H1 (cell line): ENCODE measurements at regions of chr6 and their contacts with region 1.

Region 1: GRCh38 chr6:52263709-52264540 is 19.6 kb upstream of the IL17F start:
- DNase-seq: peak; percentile 21 to 75
- H3K4me3 ChIP-seq: no peak overlapping the region
- H3K27ac ChIP-seq: no peak overlapping the region
- H3K4me1 ChIP-seq: no peaks in the 10 kb centered on the region; a peak in 1 of 7 replicates
- H3K27me3 ChIP-seq: no peaks in the 10 kb centered on the region
- CTCF ChIP-seq: peak; percentile 82 to 94 (median 88)
- EP300 ChIP-seq: no peak
- POLR2A ChIP-seq: no peak
- RAD21 ChIP-seq: peak; percentile 88

Region 2: DNA sequence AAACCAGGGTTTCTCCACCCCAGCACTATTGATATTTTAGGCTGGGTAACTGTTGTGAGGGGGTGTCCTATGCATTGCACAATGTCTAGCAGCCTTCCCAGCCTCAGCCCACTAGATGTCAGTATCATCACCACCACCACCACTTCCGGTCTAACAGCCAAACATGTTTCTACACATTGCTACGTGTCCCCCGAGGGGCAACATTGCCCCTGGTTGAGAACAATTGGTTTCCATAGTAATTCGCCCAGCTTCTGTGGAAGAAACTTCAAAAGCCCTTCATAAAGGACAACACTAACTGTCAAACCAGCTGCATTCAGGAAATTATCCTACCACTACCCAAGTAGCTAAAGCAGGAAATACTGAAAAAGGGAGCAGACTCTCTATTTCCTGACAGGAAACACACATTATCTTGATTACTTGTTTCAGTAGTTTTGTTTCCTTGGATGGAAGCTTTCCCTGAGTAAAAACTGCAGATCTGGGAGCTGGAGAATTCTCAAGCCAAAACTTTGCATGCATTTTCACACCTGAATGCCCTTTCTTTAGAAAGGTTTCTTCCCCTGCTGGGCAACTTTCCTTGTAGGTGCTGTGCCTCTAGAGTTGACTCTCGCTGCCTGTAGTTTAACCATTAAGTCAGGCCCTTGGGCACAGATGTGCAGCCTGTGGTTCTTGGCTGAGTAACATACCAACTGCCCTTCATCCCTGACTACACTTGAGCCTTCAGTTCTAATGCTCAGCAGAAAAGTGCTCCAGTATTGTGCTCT is 200.2 kb before region 1 on chr6:
- CTCF ChIA-PET with region 1: interaction called, 12 read pairs
- POLR2A ChIA-PET with region 1: no interaction called
- DNase-seq: peak in 1 of 2 experiments; percentile 15
- H3K4me3 ChIP-seq: no peak overlapping the region
- H3K27ac ChIP-seq: no peak overlapping the region; the same call in 1 of the 2 replicates
- H3K4me1 ChIP-seq: peaks cover 0 to 16% (median 7%) of the 10 kb centered on the region in 4 experiments; a peak in 5 of 7 replicates
- H3K27me3 ChIP-seq: no peaks in the 10 kb centered on the region
- CTCF ChIP-seq: peak; percentile 67 to 76 (median 70)
- EP300 ChIP-seq: no peak
- POLR2A ChIP-seq: no peak
- RAD21 ChIP-seq: peak; percentile 76 to 82

Region 3: DNA sequence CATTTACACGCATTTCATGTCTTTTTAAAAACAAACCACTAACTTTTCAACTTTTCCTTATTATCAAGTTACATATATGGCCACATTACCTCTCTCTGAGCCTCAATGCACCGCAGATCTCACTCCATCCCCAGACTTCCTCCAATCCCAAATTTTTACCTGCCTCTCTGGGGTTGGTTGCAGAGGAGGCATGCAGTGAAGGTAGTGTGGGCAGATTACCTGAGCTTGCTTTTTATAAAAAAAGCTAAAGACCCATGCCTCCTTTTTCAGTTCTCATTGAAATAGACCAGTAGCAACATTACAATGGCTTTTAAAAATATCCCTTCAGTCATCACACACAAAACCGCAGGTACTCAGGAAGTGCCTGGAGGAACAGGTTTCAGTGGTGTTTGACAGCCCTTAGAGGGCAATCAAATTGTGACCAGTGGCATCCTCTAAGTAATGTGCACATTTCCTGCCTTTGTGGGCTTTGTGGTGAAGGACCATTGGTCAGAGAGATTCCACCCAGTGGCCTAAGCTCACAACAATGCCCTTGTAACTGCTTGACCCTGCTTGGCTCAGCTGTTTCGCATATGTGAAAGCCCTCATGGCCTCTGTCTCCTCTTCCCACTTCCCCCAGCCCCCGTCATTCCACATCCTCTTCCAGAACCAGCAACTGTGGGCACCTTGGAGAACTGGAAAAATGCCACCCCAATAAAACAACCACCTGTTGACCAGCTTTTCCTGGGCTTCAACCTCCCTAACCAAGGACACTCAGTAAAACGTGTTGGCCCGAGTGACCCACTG is 107.9 kb before region 1 on chr6:
- CTCF ChIA-PET with region 1: interaction called, 149 read pairs
- POLR2A ChIA-PET with region 1: interaction called, 8 read pairs
- DNase-seq: peak; percentile 47 to 52
- H3K4me3 ChIP-seq: no peak overlapping the region; a peak in 1 of 8 replicates
- H3K27ac ChIP-seq: no peak overlapping the region
- H3K4me1 ChIP-seq: peaks cover 3 to 19% (median 15%) of the 10 kb centered on the region in 4 experiments; a peak in 6 of 7 replicates
- H3K27me3 ChIP-seq: no peaks in the 10 kb centered on the region; a peak in 1 of 7 replicates
- CTCF ChIP-seq: no peak
- EP300 ChIP-seq: no peak
- POLR2A ChIP-seq: no peak
- RAD21 ChIP-seq: peak in 1 of 2 experiments; percentile 6; a peak in 1 of 4 replicates

Region 4: DNA sequence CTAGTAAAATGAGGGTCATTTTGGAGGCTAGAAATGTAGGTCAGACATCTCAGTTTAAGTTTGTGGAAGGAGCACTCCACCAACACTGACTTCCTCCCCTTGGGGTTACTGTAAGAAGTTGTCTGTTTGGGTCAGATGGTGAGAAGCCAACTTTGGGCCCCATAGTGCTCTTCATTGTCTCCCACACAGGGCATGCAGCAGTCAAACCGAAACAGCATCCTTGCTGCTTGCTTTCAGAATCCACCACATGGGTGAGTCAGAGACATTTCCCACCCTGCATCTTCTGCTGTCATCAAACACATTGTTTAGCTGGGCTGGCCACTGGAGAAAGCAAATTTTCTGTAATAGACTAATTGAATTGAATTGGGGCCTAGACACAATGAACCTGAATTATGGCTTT is 36.4 kb before region 1 on chr6:
- CTCF ChIA-PET with region 1: interaction called, 39 read pairs
- POLR2A ChIA-PET with region 1: no interaction called
- DNase-seq: no peak
- H3K4me3 ChIP-seq: no peak overlapping the region
- H3K27ac ChIP-seq: no peak overlapping the region
- H3K4me1 ChIP-seq: no peaks in the 10 kb centered on the region
- H3K27me3 ChIP-seq: no peaks in the 10 kb centered on the region
- CTCF ChIP-seq: no peak
- EP300 ChIP-seq: no peak
- POLR2A ChIP-seq: no peak
- RAD21 ChIP-seq: no peak

Region 5: DNA sequence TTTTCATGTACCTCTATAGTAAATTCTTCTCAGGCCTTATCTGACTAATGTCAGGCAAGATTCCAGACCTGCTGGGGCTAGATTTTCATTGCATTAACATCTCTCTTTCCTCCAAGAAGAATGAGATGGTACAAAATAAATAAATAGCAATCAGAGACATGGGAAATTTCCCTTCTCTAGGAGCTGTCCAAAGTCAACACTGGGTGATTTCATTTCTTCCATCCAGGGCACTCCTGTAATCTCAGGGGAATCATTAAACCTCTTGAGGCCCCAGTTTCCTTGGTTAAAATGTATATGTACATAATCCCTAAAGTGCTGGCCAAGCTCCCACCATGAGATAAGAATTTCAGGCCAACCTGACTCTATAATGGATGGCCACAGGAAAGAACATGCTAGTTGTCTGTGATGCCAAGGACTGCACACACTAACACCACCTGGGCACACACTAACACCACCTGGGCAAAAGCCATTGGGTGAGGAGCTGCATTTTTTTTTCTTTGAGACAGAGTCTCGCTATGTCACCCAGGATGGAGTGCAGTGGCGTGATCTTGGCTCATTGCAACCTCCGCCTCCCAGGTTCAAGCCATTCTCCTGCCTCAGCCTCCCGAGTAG is 20.5 kb before region 1 on chr6:
- CTCF ChIA-PET with region 1: interaction called, 99 read pairs
- POLR2A ChIA-PET with region 1: interaction called, 5 read pairs
- DNase-seq: no peak
- H3K4me3 ChIP-seq: no peak overlapping the region
- H3K27ac ChIP-seq: no peak overlapping the region
- H3K4me1 ChIP-seq: no peaks in the 10 kb centered on the region
- H3K27me3 ChIP-seq: no peaks in the 10 kb centered on the region
- CTCF ChIP-seq: no peak
- EP300 ChIP-seq: no peak
- POLR2A ChIP-seq: no peak
- RAD21 ChIP-seq: no peak